MCF 10A (cell line): ENCODE measurements at regions of chr2 and their contacts with region 1.

Region 1: DNA sequence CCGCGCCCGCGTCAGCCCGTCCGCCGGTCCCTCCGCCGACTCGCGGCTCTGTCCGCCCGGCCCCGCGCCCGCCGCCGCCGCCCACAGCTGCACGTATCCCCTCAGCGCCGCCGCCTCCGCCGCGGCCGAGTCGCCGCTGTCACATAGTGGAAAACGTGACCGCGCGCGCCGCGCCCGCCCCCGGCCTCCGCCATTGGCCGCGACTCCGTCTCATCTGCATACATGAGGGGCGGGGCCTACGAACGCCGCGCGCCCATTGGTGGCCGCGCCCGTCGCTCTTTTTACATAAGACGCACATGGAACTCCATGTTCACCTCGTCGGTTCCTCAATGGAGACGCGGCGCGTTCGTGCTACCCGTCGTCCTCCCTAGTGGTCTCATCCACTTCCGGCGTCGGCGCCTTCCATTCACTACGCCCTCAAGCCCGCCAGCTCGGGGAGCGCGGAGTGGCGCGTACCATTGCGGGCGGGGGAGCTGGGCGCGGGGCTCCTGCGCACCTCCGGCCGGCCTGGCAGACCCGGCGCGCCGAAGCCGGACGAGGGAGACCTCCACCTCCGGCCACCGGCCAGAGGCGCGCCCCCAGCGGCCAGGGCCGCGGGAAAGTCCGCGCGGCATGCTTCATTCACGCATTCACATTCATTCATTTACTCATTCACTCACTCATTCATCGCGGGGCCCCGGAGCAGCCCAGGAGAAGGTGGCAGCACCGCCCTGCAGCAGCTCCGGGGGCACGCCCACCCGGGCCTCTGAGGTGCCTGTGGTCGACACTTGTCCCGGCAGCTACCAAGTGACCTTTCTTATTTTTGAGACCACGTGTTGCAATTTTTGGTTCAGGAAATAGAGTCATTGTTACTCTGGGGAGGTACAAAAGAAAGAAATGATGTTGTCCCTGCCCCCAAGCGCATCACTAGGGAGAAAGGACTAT is 502 bp upstream of the PER2 start:
- DNase-seq: peak; percentile 98
- H3K4me3 Mint-ChIP-seq: peak overlapping the region; percentile 74
- H3K27ac Mint-ChIP-seq: peak overlapping the region; percentile 99
- H3K4me1 Mint-ChIP-seq: peaks cover 43% of the 10 kb centered on the region
- H3K27me3 Mint-ChIP-seq: no peaks in the 10 kb centered on the region
- CTCF ChIP-seq: peak; percentile 19

Region 2: GRCh38 chr2:238203094-238203972 is 85.6 kb before region 1 on chr2 and contains the start of gene ILKAP:
- CTCF ChIA-PET with region 1: no interaction called
- POLR2A ChIA-PET with region 1: interaction called, 14 read pairs
- intact Hi-C with region 1: no loop called
- DNase-seq: peak; percentile 82
- H3K4me3 Mint-ChIP-seq: peak within 1 kb of the TSS; percentile 84
- H3K27ac Mint-ChIP-seq: peak within 1 kb of the TSS; percentile 89
- H3K4me1 Mint-ChIP-seq: peaks cover 29% of the 10 kb centered on the region
- H3K27me3 Mint-ChIP-seq: no peaks in the 10 kb centered on the region
- CTCF ChIP-seq: no peak
- total RNA-seq, gene ILKAP: 57.2 and 59.6 TPM in 2 replicates

Region 3: GRCh38 chr2:238220892-238221521 is 67.9 kb before region 1 on chr2:
- CTCF ChIA-PET with region 1: no interaction called
- POLR2A ChIA-PET with region 1: no interaction called
- intact Hi-C with region 1: no loop called
- DNase-seq: no peak
- H3K4me3 Mint-ChIP-seq: peak overlapping the region; percentile 28
- H3K27ac Mint-ChIP-seq: no peak overlapping the region
- H3K4me1 Mint-ChIP-seq: no peaks in the 10 kb centered on the region
- H3K27me3 Mint-ChIP-seq: no peaks in the 10 kb centered on the region
- CTCF ChIP-seq: no peak

Region 4: GRCh38 chr2:238263204-238264071 is 25.5 kb before region 1 on chr2:
- CTCF ChIA-PET with region 1: interaction called, 14 read pairs
- POLR2A ChIA-PET with region 1: interaction called, 95 read pairs
- intact Hi-C with region 1: no loop called
- DNase-seq: peak; percentile 86
- H3K4me3 Mint-ChIP-seq: no peak overlapping the region
- H3K27ac Mint-ChIP-seq: peak overlapping the region; percentile 49
- H3K4me1 Mint-ChIP-seq: peaks cover 20% of the 10 kb centered on the region
- H3K27me3 Mint-ChIP-seq: no peaks in the 10 kb centered on the region
- CTCF ChIP-seq: peak; percentile 70

Region 5: DNA sequence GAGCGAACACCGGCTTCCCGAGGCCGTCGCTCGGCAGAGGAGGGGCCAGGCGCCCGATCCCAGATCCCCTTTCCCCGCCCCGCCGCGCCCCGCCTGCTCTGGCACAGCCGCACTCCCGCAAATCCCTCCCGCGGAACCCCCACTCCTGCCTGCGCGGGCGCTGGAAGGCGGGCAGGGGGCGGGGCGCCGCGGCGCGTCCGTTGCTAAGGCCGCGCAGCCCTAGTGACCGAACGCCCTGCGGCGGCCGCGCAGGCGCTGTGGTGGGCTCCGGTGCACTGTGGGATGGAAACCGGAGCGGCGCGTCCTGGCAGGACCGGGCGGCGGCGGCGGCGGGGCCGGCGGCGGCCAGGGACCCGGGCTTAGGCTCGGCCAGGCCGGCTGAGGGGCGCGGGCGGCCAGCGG is 31.3 kb after region 1 on chr2 and contains the start of gene TRAF3IP1:
- CTCF ChIA-PET with region 1: no interaction called
- POLR2A ChIA-PET with region 1: interaction called, 139 read pairs
- intact Hi-C with region 1: loop called (anchors 1 kb)
- DNase-seq: peak; percentile 93
- H3K4me3 Mint-ChIP-seq: peak within 1 kb of the TSS; percentile 76
- H3K27ac Mint-ChIP-seq: peak within 1 kb of the TSS; percentile 66
- H3K4me1 Mint-ChIP-seq: peaks cover 7% of the 10 kb centered on the region
- H3K27me3 Mint-ChIP-seq: no peaks in the 10 kb centered on the region
- CTCF ChIP-seq: no peak
- total RNA-seq, gene TRAF3IP1: 19.1 and 30.1 TPM in 2 replicates

Region 6: DNA sequence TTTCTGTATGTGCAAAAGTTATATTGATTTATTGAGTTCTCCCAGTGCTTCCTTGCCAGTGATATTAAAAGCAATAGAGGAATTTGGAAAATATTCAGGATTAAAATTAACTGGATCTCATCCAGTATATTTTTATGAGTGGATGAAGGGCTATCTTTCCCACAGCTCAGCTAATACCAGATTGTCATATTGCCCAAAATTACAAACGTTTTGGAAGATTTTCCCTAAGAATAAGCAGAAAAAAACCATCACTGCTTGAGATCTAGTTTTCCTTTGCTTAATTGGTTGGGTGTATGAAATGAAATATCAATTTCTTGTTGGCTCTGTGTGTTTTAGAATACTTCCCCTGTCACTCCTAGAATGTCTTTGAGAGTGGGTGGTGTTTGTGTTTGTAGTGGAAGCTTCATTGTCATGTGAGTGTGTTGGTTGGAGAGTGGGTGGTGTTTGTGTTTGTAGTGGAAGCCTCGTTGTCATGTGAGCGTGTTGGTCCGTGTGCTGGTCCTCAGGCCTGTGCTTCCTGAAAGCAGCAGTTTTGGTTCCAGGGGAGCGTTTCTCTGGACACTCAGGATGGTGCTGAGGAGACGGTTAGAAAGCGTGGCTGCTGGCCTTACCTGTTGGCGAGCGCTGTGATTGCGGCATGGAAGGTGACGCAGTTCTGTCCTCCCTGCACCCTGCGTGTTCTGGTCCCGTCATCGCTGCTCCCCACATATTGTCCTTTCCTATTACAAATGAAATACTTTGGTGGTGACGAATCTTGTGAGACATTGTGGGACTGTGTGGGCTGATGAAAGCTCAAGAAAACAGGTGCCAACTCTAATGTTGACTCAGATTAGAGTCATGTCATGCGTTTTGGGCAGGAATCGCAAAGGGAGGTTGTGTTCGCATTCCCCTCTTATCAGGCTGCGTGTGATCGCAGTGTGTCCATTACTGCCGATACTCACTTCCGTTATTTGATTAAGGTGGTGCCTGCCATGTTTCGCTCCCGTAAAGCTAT is 150.2 kb after region 1 on chr2:
- CTCF ChIA-PET with region 1: no interaction called
- POLR2A ChIA-PET with region 1: interaction called, 4 read pairs
- intact Hi-C with region 1: loop called (anchors 1 kb)
- DNase-seq: peak; percentile 99
- H3K4me3 Mint-ChIP-seq: peak overlapping the region; percentile 54
- H3K27ac Mint-ChIP-seq: peak overlapping the region; percentile 99
- H3K4me1 Mint-ChIP-seq: peaks cover 32% of the 10 kb centered on the region
- H3K27me3 Mint-ChIP-seq: no peaks in the 10 kb centered on the region
- CTCF ChIP-seq: no peak